Ascending aorta (tissue), 2 donors: ENCODE measurements at regions of chr5 and their contacts with region 1.

Region 1: GRCh38 chr5:74993743-74994142 is 58.6 kb downstream of the GCNT4 start:
- DNase-seq: no peak
- H3K4me3 ChIP-seq: no peak overlapping the region
- H3K27ac ChIP-seq: no peak overlapping the region
- H3K4me1 ChIP-seq: no peaks in the 10 kb centered on the region
- H3K27me3 ChIP-seq: no peaks in the 10 kb centered on the region
- CTCF ChIP-seq: no peak

Region 2: DNA sequence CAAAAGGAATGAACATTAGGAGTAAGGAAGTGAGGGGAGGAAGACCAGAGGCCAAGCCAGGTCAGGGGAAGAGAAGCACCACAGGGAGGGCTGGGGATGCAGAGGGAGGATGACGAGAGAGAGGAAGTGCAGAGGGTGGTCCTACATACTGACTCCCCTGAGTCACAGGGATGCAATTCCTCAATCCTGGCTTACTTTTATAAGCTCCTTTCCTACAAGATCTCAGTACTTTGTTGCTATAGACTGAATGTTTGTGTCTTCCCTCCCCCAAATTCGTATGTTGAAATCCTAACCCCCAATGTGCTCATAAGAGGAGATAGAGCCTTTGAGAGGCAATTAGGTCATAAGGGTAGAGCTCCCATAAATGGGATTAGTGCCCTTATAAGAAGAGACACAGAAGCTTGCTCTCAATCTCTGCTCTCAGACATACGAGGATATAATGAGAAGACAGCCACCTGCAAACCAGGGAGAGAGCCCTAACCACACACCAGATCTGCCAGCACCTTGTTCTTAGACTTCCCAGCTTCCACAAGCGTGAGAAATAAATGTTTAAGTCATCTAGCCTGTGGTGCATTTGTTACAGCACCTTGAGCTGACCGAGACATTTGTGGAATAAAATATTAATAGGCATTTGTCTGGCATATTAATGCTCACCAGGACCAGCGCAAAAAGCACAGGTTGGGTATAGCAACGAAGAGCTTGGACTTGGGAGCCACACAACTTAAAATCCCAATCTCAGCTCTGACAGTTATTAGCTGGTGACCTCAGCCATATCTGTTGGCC is 25.3 kb after region 1 on chr5:
- intact Hi-C with region 1: no loop called
- DNase-seq: no peak
- H3K4me3 ChIP-seq: no peak overlapping the region
- H3K27ac ChIP-seq: no peak overlapping the region
- H3K4me1 ChIP-seq: no peaks in the 10 kb centered on the region
- H3K27me3 ChIP-seq: no peaks in the 10 kb centered on the region
- CTCF ChIP-seq: no peak

Region 3: GRCh38 chr5:75089137-75089536 is 95.4 kb after region 1 on chr5:
- intact Hi-C with region 1: loop called (anchors 10 kb)
- DNase-seq: no peak
- H3K4me3 ChIP-seq: no peak overlapping the region
- H3K27ac ChIP-seq: no peak overlapping the region
- H3K4me1 ChIP-seq: no peaks in the 10 kb centered on the region
- H3K27me3 ChIP-seq: no peaks in the 10 kb centered on the region
- CTCF ChIP-seq: no peak